OCI-LY7 (cell line): ENCODE measurements at regions of chr15 and their contacts with region 1.

Region 1: DNA sequence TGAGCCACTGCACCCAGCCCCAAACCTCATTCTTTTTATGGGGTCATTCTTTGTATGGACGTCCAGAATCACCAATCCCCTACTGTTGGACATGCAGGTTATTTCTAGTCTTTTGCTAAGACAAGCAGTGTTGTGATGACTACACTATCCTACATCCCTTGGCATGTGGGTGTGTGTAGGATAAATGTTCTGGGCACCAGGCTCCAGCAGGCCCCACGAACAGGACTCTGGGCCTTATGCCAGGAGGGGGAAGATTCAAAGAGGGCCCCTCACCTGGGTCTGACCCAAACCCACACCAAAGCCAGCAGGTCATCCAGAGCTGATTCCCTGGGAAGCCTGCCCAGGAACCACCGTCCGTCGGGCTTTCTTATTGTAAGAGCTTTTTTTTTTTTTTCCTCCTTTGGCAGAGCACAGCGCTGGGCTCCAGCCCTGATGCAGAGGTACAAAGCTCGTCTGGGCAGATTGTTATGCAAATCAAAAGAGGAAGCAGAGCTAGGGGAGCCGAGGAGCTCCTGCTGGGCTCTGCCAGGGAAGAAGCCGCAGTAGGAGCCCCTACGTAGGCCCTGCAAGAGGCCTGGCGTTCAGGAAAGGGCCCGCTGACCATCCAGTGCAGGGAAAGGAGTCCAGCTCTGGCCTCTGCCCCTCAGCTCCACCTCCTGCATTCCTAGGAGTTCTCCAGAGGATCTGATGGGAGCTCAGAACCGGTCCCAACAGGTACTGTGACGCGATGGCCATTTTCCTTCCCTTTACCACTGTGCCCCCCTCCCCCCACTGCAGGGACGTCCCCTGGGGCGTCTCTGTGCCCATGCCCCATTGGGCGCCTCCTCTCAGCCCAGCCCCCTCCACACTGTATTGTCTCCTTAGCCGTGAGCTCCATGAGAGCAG is 29.0 kb upstream of the FURIN start:
- DNase-seq: peak; percentile 86
- H3K4me3 ChIP-seq: peak overlapping the region; percentile 69
- H3K27ac ChIP-seq: peak overlapping the region; percentile 36
- H3K4me1 ChIP-seq: peaks cover 36% of the 10 kb centered on the region
- CTCF ChIP-seq: no peak

Region 2: DNA sequence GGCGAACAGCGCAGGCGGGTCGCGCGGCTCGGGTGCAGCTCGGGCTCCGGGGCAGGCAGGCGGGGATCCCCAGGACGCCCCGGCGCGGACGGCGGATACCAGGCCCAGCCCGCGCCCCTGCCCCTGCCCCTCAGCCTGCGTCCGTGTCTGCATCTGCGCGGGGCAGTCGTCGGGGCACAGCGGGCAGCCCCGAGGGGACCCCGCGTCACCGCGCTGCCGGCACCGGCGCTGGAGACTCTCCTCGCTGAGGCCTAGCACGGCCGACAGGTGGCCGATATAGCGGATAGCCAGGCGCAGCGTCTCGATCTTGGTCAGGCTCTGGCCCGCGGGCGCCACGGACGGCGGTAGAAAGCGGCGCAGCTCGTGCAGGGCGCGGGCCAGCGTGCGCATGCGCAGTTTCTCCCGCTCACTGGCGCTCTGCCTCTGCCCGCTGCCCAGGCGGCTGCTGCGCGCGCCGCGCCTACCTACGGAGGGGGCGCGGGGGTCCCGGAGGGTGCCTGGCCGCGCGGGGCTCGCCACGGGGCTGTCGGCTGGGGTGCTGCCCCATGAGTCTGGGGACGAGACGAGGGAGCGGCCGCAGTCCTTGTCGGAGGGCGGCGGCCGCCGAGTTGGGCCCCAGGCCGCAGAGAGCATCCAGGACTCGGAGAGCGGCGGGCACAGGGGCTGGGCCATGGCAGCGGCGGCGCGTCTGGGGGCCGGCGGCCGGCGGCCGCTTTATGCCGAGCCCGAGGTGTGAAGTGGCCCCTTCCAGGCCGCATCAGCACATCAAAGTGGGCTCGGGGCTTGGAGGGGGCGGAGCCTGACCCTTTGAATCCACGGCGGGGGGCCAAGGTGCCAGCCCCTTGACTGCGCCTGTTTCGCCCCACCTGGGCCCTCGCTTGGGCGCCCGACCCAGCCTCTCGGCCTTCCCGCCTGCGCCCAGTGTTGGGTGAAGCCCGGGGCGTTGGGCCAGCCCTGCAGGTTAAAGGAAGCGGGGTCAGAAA is 1088.6 kb before region 1 on chr15 and contains the start of gene MESP1:
- CTCF ChIA-PET with region 1: no interaction called
- POLR2A ChIA-PET with region 1: no interaction called
- intact Hi-C with region 1: no loop called
- DNase-seq: peak; percentile 92
- H3K4me3 ChIP-seq: peak within 1 kb of the TSS; percentile 70
- H3K27ac ChIP-seq: no peak within 1 kb of the TSS
- H3K4me1 ChIP-seq: peaks cover 7% of the 10 kb centered on the region
- CTCF ChIP-seq: peak; percentile 68
- total RNA-seq, gene MESP1: 0.05 and 3.5 TPM in 2 replicates

Region 3: DNA sequence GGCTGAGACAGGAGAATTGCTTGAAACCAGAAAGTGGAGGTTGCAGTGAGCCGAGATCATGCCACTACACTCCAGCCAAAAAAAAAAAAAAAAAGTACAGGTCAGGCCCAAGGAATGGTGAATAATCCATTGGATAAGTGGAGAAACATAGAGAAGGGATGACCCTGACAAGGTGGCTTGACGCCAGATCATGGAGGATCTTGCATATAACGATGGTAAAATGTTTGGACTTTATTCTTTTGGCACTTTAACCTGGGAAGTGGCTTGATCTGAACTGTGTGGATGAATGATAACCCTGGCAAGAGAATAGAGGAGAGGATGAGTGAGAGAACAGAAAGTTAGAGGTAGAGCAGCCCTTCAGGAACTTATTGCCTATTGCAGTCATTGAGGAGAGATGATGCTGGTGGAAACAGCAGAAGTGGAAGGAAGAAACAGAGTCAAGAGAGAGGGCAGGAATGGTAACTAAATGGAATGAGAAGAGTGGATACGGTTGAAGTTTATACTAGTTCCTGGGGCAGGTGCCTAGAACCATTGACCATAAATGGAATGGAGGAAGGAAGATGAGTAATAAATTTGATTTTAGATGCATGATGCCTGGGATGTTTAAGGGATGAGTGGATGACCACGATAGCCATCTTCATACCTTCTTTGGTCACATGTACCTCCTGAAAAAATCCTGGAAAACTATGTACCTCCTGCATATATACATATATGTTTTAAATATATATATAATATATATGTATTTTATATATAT is 64.5 kb before region 1 on chr15:
- CTCF ChIA-PET with region 1: no interaction called
- POLR2A ChIA-PET with region 1: no interaction called
- intact Hi-C with region 1: no loop called
- DNase-seq: no peak
- H3K4me3 ChIP-seq: no peak overlapping the region
- H3K27ac ChIP-seq: no peak overlapping the region
- H3K4me1 ChIP-seq: peaks cover 7% of the 10 kb centered on the region
- CTCF ChIP-seq: no peak

Region 4: DNA sequence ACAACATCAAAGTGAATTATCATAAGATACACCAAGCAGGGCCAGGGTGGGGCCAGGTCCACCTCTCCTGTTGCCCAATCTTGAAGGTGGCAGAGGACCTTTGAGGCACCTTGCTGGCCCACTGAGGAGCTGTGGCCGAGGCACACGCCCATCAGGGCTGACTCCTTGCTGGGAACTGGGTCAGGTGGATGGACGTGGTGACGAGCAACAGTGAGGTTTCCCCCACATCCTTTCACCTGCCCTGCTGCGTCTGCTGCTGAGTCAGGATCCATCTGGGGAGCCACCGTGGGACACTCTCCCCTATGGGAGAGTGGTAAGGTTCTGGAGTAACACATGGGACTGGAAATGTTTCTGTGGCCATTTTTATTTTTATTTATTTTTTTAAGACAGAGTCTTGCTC is 11.7 kb after region 1 on chr15:
- CTCF ChIA-PET with region 1: interaction called, 5 read pairs
- POLR2A ChIA-PET with region 1: interaction called, 15 read pairs
- intact Hi-C with region 1: no loop called
- DNase-seq: no peak
- H3K4me3 ChIP-seq: no peak overlapping the region
- H3K27ac ChIP-seq: no peak overlapping the region
- H3K4me1 ChIP-seq: peaks cover 55% of the 10 kb centered on the region
- CTCF ChIP-seq: no peak

Region 5: DNA sequence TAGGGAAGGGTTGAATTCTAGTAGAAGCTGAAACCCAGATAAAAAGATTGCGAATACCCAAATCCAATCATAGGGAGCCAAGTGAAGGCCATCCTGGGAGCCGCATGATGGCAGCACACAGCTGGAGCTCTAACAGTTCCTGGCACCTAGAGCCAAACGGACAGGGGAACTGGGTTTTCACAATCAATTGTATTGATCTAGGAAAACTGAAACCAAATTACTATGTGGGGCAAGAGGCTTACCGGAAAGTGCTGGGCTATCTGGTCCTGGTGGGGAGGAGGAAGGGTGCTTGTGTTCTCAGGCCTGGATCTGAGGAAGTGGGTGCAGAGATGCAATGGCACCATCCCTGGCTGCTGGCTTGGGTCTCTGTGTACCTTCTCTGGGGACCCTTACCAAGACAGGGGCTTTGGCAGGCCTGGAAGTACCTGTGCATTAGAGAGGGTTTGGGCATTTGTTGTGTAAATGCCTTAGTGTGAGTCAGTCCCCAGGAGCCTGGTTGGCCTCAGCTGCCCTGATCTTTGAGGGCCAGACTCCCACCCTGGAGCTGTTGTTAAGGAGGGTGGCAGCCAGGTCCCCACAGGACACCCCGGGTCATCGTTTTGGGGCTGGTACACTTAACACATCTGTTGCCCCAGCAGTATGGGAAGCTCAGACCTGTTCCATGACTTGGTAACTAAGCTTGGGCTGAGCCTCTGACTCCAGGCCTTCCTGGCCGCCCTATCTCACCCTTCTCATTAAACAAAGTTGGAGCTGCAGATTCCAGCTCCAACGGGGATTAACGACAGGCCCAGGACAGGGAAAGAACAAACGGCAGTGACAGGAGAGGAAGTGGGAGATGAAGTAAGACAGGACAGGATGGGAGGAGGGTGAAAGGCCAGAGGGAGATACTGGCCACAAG is 20.1 kb after region 1 on chr15:
- CTCF ChIA-PET with region 1: interaction called, 18 read pairs
- POLR2A ChIA-PET with region 1: interaction called, 5 read pairs
- intact Hi-C with region 1: no loop called
- DNase-seq: no peak
- H3K4me3 ChIP-seq: no peak overlapping the region
- H3K27ac ChIP-seq: no peak overlapping the region
- H3K4me1 ChIP-seq: peaks cover 30% of the 10 kb centered on the region
- CTCF ChIP-seq: no peak